Activated T-helper 1 cell treated with anti-CD3 and anti-CD28 coated beads, Interleukin-12 subunit alpha, Interleukin-12 subunit beta, Interleukin-2, Interleukin-4 antibody, amounts not matched to agents 30 ng/mL and 10 ng/mL and 1 ng/mL, durations not matched to agents 14 hours and 24 hours and 36 hours (primary cell): ENCODE measurements at regions of chr2 and their contacts with region 1.

Region 1: DNA sequence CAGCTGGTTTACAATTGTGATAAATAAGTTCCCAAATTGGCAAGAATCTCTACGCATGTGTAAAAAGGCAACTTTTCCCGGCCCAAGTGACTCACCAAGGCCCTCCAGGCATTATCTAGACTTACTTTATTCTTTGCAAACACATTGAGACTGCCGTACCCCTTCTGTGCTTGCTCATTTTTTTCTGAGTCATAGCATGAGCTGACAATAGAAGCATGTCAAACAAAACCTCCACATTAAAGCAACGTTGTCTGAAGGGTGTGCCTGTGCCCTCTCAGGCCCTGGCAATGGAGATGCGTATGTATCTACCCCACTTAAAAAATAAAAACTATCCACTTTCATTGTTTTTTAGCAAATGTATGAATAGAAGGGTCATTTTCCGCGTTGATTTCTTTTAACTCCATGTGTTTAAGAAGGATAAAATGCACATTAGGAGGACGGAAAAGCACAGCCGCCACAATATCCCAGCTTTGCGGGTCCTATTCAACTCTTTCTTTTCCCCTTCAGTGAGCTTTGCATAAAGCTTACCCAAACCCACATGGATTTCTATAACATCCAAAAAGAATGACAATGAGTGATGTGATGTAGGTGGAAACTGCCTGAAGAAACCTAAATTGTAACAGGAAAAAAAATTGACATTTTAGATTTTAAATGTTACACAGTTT is 298.2 kb downstream of the CDCA7 start:
- DNase-seq: no peak
- H3K4me3 Mint-ChIP-seq: no peak overlapping the region
- H3K27ac Mint-ChIP-seq: no peak overlapping the region
- H3K4me1 Mint-ChIP-seq: no peaks in the 10 kb centered on the region
- H3K27me3 Mint-ChIP-seq: peaks cover 5% of the 10 kb centered on the region

Region 2: GRCh38 chr2:175432021-175432420 is 1779.1 kb after region 1 on chr2:
- intact Hi-C with region 1: loop called (anchors 5 kb)
- DNase-seq: no peak
- H3K4me3 Mint-ChIP-seq: no peak overlapping the region
- H3K27ac Mint-ChIP-seq: no peak overlapping the region
- H3K4me1 Mint-ChIP-seq: no peaks in the 10 kb centered on the region
- H3K27me3 Mint-ChIP-seq: no peaks in the 10 kb centered on the region